ENCODE measurements at regions of chr1 and their contacts with region 1.

Region 1: GRCh38 chr1:111507411-111508201 is 4.2 kb upstream of the ADORA3 start:
- DNase-seq: peak; percentile 60
- H3K4me3 ChIP-seq: no peak overlapping the region
- H3K27ac ChIP-seq: no peak overlapping the region
- H3K4me1 ChIP-seq: peaks cover 15% of the 10 kb centered on the region
- H3K27me3 ChIP-seq: no peaks in the 10 kb centered on the region
- CTCF ChIP-seq: no peak

Region 2: DNA sequence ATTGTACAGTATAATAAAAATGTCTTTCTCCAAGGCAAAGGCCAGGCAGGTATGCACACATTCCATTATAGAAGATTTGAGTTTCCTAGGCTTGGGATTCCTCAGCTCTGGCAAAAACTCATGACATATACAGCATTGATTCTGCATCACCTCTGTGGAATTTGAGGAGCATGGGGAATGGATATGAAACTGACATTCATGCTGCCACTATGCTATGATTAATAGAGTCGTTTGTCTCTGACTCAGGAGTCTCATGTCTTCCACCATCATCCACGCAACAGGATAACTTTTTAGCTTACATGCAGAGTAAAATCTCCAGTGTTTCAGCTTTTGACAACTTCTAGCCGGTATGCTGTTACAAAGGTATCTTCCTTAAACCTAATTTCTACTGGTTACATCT is 45.6 kb after region 1 on chr1:
- CTCF ChIA-PET with region 1: interaction called, 14 read pairs
- dilution Hi-C with region 1: no loop called
- in situ Hi-C with region 1: no loop called
- intact Hi-C with region 1: loop called (anchors 5 kb)
- DNase-seq: peak; percentile 80
- H3K4me3 ChIP-seq: no peak overlapping the region
- H3K27ac ChIP-seq: no peak overlapping the region
- H3K4me1 ChIP-seq: peaks cover 16% of the 10 kb centered on the region
- H3K27me3 ChIP-seq: no peaks in the 10 kb centered on the region
- CTCF ChIP-seq: no peak

Region 3: DNA sequence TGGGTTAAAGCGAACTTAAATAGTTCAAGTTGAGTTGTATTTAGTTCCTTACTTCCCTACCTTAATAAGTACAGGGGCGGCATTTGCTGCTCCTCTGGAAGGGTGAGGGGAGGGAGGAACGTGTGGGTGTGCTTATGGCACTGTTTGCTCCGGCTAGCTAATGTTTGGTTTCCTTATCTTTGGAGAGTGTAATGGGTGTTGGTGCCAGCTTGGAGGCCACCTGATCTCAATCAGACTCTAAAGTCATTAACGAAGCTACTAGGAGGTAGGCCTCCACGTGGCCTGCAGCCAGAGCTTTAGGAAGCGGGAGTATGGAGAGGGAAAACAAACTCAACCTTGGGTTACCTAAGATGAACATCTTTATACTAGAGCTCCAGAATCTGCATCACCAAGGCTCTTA is 68.9 kb after region 1 on chr1:
- CTCF ChIA-PET with region 1: no interaction called
- dilution Hi-C with region 1: no loop called
- in situ Hi-C with region 1: no loop called
- intact Hi-C with region 1: no loop called
- DNase-seq: no peak
- H3K4me3 ChIP-seq: no peak overlapping the region
- H3K27ac ChIP-seq: no peak overlapping the region
- H3K4me1 ChIP-seq: no peaks in the 10 kb centered on the region
- H3K27me3 ChIP-seq: no peaks in the 10 kb centered on the region
- CTCF ChIP-seq: no peak

Region 4: GRCh38 chr1:111656086-111657017 is 148.7 kb after region 1 on chr1:
- CTCF ChIA-PET with region 1: no interaction called
- dilution Hi-C with region 1: no loop called
- in situ Hi-C with region 1: loop called (anchors 5 kb)
- intact Hi-C with region 1: loop called (anchors 1 kb)
- DNase-seq: peak; percentile 27
- H3K4me3 ChIP-seq: no peak overlapping the region
- H3K27ac ChIP-seq: no peak overlapping the region
- H3K4me1 ChIP-seq: no peaks in the 10 kb centered on the region
- H3K27me3 ChIP-seq: no peaks in the 10 kb centered on the region
- CTCF ChIP-seq: peak; percentile 52 to 65

Region 5: DNA sequence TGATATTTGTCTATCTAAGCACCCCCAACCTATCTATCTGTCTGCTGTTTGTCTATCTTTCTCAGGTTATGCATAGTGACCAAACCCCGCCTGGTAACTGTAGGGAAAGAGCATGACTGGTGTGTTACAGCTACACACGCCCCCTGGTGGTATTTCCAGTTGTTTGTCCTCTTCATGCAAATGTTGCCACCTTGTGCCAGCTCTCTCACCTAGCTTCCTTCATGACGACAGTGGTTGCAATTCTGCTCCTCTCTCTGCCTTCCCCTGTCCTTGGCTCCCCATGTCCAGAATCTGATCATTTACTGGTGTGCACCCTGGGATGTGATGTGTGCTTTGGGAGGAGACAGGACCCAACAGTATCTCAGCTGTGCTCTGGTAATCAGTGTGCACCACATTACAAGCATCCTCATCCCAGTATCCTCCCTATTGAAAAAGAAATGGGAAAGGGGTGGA is 239.7 kb after region 1 on chr1:
- CTCF ChIA-PET with region 1: no interaction called
- dilution Hi-C with region 1: no loop called
- in situ Hi-C with region 1: no loop called
- intact Hi-C with region 1: loop called (anchors 1 kb)
- DNase-seq: peak; percentile 65
- H3K4me3 ChIP-seq: no peak overlapping the region
- H3K27ac ChIP-seq: no peak overlapping the region
- H3K4me1 ChIP-seq: no peaks in the 10 kb centered on the region
- H3K27me3 ChIP-seq: no peaks in the 10 kb centered on the region
- CTCF ChIP-seq: peak; percentile 74 to 81